ENCODE measurements at regions of chr10 and their contacts with region 1.

Region 1: GRCh38 chr10:132627666-132628531 is 90.3 kb downstream of the INPP5A start:
- DNase-seq: no peak
- H3K4me3 ChIP-seq: no peak overlapping the region
- H3K27ac ChIP-seq: no peak overlapping the region
- H3K4me1 ChIP-seq: no peaks in the 10 kb centered on the region
- H3K27me3 ChIP-seq: no peaks in the 10 kb centered on the region
- CTCF ChIP-seq: no peak

Region 2: DNA sequence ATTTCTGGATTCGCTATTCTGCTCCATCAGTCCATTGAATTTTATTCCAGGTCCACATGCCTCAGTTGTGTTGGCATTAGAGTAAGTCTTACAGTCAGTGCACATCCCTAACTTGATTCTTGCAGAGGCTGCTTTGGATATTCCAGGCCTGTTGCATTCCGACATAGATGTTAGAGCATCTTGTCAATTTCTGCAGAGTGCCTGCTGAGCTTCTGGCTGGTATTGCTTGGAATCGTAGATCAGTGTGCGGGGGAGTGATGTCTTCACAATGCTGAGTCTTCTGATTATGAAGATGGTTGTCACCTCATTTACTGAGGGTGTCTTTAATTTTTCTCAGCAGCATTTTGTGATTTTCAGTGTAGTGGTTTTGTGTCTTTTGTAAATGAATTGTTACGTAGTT is 45.1 kb before region 1 on chr10:
- CTCF ChIA-PET with region 1: no interaction called
- dilution Hi-C with region 1: loop called (anchors 5 kb)
- in situ Hi-C with region 1: no loop called
- intact Hi-C with region 1: no loop called
- DNase-seq: no peak
- H3K4me3 ChIP-seq: no peak overlapping the region
- H3K27ac ChIP-seq: no peak overlapping the region
- H3K4me1 ChIP-seq: no peaks in the 10 kb centered on the region
- H3K27me3 ChIP-seq: no peaks in the 10 kb centered on the region
- CTCF ChIP-seq: no peak